Ascending aorta (tissue), 2 donors: ENCODE measurements at regions of chr2 and their contacts with region 1.

Region 1: GRCh38 chr2:37890893-37891495 is 34.1 kb upstream of the RMDN2 start:
- DNase-seq: peak in 1 of 2 donors; percentile 81
- H3K4me3 ChIP-seq: no peak overlapping the region
- H3K27ac ChIP-seq: no peak overlapping the region
- H3K4me1 ChIP-seq: no peaks in the 10 kb centered on the region
- H3K27me3 ChIP-seq: no peaks in the 10 kb centered on the region
- CTCF ChIP-seq: peak; percentile 55 to 78 (median 72)

Region 2: GRCh38 chr2:37168217-37168981 is 722.6 kb before region 1 on chr2:
- intact Hi-C with region 1: loop called (anchors 5 kb)
- DNase-seq: no peak
- H3K4me3 ChIP-seq: no peak overlapping the region
- H3K27ac ChIP-seq: no peak overlapping the region
- H3K4me1 ChIP-seq: no peaks in the 10 kb centered on the region
- H3K27me3 ChIP-seq: no peaks in the 10 kb centered on the region
- CTCF ChIP-seq: peak; percentile 26 to 55 (median 51)

Region 3: GRCh38 chr2:37832590-37833197 is 58.3 kb before region 1 on chr2:
- intact Hi-C with region 1: no loop called
- DNase-seq: peak; percentile 38 to 96
- H3K4me3 ChIP-seq: no peak overlapping the region
- H3K27ac ChIP-seq: no peak overlapping the region
- H3K4me1 ChIP-seq: peaks cover 0 to 16% of the 10 kb centered on the region in 2 donors
- H3K27me3 ChIP-seq: no peaks in the 10 kb centered on the region
- CTCF ChIP-seq: peak; percentile 63 to 91 (median 82)